Activated CD8-positive, alpha-beta T cell treated with anti-CD3 and anti-CD28 coated beads for 36 hours (primary cell): ENCODE measurements at regions of chr21 and their contacts with region 1.

Region 1: DNA sequence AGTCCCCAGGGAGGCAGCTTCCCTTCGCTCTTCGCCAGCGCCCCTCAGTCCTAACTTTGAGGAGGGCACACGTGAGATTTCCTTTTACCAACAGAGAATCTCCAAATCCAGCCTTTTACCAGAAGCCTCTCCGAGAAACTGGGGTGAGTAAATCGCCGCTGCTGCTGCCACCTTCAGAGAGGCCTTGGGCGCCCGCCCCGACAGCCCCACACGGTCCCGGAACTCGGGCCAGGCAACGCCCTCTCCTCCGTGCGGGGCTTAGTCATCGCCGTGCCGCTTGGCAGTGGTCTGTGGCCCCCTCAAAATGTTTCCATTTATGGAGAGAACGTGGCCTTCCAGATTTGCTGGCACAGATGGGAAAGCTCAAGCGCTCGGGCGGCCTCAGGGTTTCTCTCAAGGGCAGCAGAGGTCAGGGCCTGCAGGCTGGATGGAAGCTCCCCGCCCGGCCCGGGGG is 41.4 kb upstream of the COL6A2 start:
- DNase-seq: peak; percentile 74
- ATAC-seq: peak; percentile 48
- H3K4me3 Mint-ChIP-seq: no peak overlapping the region
- H3K27ac Mint-ChIP-seq: peak overlapping the region; percentile 57
- H3K4me1 Mint-ChIP-seq: peaks cover 79% of the 10 kb centered on the region
- H3K27me3 Mint-ChIP-seq: peaks cover 8% of the 10 kb centered on the region
- CTCF ChIP-seq: no peak

Region 2: DNA sequence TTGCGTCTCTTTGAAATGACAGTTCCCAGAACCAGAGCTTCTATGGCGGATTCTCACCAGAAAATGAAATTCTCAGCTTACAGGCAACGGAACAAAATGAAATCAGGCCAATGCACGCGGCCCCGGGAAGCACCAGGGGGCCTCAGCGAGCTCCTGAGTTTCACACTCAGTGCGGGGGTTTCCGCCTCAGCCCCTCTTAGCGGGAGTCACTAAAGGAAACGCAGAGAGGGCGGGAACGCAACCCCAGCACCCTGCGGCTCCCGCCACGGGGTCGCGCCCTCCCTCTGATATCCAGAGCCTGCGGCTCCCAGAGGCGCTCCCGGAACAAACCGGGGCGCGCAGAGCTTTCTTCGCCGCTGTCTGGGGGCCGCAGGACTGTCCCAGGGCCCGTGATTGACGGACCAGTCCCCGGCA is 82.8 kb before region 1 on chr21:
- CTCF ChIA-PET with region 1: interaction called, 3 read pairs
- POLR2A ChIA-PET with region 1: no interaction called
- intact Hi-C with region 1: loop called (anchors 10 kb)
- DNase-seq: peak; percentile 96
- ATAC-seq: peak; percentile 84
- H3K4me3 Mint-ChIP-seq: peak overlapping the region; percentile 64
- H3K27ac Mint-ChIP-seq: peak overlapping the region; percentile 82
- H3K4me1 Mint-ChIP-seq: peaks cover 26% of the 10 kb centered on the region
- H3K27me3 Mint-ChIP-seq: peaks cover 15% of the 10 kb centered on the region
- CTCF ChIP-seq: peak; percentile 81